ENCODE measurements at regions of chr2 and their contacts with region 1.

Region 1: DNA sequence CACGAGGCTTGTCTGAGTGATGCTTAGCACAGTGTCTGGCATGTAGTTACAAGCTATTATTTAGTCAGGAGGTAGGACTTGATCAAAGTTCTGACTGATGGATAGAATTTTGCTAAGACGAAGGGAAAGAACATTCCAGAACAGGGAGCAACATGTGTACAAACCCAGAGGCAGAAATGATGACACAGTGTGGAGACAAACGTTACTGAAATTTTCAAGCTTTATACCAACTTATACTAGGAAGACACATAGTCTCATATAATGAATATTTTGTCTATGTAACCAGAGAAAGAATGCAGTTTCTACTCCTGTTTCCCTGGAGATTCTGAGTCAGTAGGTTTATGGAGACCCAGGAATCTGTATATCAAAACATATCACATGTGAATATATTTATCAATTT is 123.4 kb downstream of the FAM124B start:
- DNase-seq: no peak
- H3K4me3 Mint-ChIP-seq: no peak overlapping the region
- H3K27ac Mint-ChIP-seq: no peak overlapping the region
- H3K4me1 Mint-ChIP-seq: no peaks in the 10 kb centered on the region
- H3K27me3 Mint-ChIP-seq: peaks cover 10% of the 10 kb centered on the region

Region 2: DNA sequence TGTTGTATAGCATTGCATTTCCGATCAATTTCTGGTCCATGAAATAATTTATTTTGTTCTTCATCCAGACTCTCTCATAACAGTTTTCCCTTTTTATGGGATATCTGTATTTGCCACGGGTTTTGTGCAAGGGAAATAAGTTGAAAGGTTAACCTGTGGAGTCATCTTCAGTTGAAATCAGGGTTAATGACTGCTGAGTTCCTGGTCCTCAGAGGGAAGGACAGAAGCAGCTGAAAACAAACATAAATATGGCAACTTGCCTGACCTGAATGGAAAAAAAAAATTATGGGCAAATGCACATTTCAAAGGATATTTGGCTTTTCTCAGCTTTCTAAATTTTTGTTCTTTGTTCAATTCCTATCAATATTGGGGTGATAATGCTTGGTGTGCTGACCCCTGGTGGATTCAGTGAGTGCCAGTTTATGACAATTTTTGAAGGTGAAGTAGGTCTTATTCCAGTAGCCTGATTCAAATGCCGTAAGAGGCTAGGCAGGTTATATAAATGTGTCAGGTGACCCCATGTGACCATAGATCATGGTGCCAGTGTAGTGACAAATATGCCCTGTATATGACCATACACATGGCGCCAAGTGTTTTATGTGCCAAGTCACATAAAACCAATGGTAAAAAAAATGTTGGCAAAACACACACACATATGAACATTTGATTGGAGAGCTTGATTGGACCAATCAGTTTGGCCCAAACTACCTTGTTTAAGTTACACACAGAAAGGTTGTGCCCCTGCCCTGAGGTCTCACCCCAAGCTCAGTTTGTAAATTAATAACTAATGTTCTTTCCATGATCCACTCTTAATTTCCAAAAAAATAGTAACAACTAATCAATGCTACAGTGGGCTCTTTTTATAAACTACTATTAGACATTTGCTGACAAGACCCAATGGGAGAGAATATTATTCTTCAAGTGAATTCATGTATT is 170.9 kb after region 1 on chr2:
- intact Hi-C with region 1: no loop called
- DNase-seq: no peak
- H3K4me3 Mint-ChIP-seq: no peak overlapping the region
- H3K27ac Mint-ChIP-seq: no peak overlapping the region
- H3K4me1 Mint-ChIP-seq: no peaks in the 10 kb centered on the region
- H3K27me3 Mint-ChIP-seq: peaks cover 18% of the 10 kb centered on the region

Region 3: GRCh38 chr2:225083276-225083675 is 804.7 kb after region 1 on chr2:
- intact Hi-C with region 1: loop called (anchors 5 kb)
- DNase-seq: no peak
- H3K4me3 Mint-ChIP-seq: no peak overlapping the region
- H3K27ac Mint-ChIP-seq: no peak overlapping the region
- H3K4me1 Mint-ChIP-seq: peaks cover 5% of the 10 kb centered on the region
- H3K27me3 Mint-ChIP-seq: peaks cover 4% of the 10 kb centered on the region

Measured in activated T-helper 1 cell treated with anti-CD3 and anti-CD28 coated beads, Interleukin-12 subunit alpha, Interleukin-12 subunit beta, Interleukin-2, Interleukin-4 antibody, amounts not matched to agents 30 ng/mL and 10 ng/mL and 1 ng/mL, durations not matched to agents 14 hours and 24 hours and 36 hours (primary cell).